HEK293 (cell line): ENCODE measurements at regions of chr2 and their contacts with region 1.

Region 1: DNA sequence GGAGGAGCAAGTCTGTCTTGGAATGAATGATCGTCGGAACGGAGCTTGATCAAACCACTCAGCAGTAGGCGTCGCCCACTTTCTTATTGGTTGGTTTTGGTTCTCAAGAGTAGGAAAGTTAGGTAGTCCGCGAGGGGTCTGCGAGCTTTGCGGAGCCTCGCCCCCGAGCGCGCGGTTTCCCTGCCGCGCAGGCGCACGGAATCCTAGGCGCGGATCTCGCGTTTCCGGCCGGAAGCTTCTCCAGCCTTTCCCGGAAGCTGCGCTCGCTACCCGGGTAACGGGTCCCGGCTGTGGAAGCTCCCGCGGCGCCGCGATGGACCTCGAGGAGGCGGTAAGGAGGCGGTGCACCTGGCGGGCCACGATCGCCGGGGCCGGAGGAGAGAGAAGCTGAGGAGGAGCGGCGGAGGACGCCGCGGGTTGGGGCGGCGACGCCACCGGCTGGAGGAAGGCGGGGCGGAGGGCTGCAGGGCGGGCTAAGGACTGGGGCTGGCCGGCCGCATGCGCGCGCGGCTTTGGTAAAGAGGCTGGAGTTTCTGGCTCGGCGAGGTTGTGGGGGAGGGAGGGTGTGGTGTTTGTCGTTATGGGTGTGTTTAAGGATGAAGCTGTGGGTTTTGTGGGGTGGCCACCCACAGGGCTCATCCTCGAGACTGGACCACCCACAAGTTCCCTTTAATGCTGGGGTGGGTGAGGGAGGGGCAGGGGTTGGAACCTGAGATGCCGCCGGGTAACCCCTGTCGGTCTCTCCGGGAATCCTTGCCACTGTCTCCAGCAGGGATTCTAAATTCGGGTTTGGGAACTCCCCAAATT is at the start of gene TAF1B:
- H3K4me3 ChIP-seq: peak within 1 kb of the TSS; percentile 84
- H3K27ac ChIP-seq: peak within 1 kb of the TSS; percentile 78
- H3K4me1 ChIP-seq: peaks cover 19% of the 10 kb centered on the region; the same call in 1 of the 2 replicates
- CTCF ChIP-seq: 0 out of 2 replicates have a peak, but pooled peaks have one; percentile 29

Region 2: DNA sequence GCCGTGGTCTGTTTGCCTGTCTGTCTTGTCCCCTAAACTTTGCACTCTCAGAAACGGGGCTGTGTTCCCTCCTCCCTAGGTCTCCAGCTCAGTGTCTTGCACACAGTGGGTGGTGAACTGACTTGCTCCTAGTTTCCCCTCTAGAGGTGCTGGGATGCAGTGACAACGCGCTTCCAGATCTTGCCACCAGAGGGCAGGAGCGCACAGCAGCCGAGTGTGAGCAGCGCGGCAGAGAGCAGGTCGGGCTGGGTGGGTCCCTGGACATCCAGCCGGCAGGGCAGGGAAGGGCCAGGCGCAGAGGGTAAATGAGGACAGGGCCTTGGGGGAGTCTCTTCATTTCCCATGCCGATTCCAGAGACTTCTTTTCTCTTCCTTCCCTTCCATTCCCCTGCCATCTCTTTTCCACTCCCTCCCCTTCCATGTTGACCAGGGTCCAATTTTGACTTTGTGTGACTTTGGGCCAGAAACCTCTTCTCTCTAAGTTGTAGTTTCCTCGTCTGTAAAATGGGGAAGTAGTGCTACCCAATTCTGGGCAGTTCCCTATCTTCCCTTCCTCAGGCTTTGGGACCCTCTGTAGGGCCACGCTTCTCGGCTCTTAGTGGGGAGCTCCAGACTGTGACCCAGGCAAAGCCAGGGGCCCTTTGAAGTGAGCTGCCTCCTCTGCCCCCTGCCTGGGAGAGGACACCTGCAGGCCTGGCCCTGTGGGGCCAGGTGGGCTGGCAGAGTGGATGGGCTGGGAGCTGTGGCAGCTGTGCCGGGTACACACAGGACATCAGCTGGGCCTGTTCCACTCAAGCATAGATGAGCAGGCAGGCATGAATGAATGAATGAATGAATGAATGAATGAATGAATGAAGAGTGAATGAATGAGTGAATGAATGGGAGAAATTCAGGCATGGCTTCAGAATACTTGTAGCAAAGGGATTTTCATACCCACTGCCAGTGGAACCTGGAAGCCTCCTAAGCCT is 43.5 kb before region 1 on chr2:
- CTCF ChIA-PET with region 1: interaction called, 10 read pairs
- POLR2A ChIA-PET with region 1: interaction called, 18 read pairs
- H3K4me3 ChIP-seq: no peak overlapping the region
- H3K27ac ChIP-seq: no peak overlapping the region
- H3K4me1 ChIP-seq: peaks cover 3% of the 10 kb centered on the region; the same call in 1 of the 2 replicates
- CTCF ChIP-seq: peak; percentile 98

Region 3: DNA sequence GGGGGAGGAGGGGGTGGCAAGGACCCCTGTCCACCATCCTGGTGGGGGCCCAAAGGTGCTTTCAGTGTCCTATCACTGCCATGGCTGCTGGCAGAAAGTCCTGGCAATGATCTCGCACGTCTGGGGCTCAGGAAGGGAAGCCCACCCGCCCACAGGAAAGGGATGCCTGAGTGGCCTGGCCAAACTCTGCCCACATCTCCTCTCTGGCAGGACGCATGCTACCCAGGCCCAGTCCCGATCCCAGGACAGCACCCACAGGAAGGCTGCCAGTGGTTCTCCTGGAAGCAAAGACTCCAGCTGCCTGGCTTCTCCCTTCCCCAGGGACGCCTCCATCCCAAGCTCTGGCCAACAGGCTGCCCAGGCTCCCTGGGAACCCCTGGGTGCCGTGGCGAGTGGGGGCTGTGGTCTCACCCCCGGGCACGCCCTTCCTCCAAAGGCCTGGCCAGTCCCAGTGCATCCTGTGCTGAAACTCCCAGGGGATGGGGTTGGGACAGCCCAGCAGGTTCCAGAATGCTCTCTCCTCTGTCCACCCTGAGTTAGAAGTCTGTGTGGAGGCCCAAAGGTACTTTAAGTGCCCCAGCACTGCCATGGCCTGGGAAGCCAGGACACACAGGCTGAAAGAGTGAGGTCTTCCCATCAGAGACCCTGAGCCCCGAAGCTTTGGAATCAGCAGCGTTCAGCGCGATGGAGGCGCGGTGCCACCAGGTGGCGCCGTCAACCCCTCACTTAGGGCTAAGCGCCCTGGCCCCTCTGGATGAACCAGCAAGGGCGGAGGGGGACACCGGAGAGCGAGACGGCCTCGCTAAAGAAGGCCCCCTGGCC is 29.9 kb before region 1 on chr2:
- CTCF ChIA-PET with region 1: interaction called, 45 read pairs
- POLR2A ChIA-PET with region 1: interaction called, 27 read pairs
- H3K4me3 ChIP-seq: no peak overlapping the region
- H3K27ac ChIP-seq: no peak overlapping the region
- H3K4me1 ChIP-seq: no peaks in the 10 kb centered on the region
- CTCF ChIP-seq: peak; percentile 86

Region 4: GRCh38 chr2:9820020-9820419 is 23.4 kb before region 1 on chr2:
- CTCF ChIA-PET with region 1: interaction called, 45 read pairs
- POLR2A ChIA-PET with region 1: interaction called, 35 read pairs
- H3K4me3 ChIP-seq: no peak overlapping the region
- H3K27ac ChIP-seq: no peak overlapping the region
- H3K4me1 ChIP-seq: no peaks in the 10 kb centered on the region
- CTCF ChIP-seq: no peak

Region 5: GRCh38 chr2:9830690-9831410 is 12.6 kb before region 1 on chr2:
- CTCF ChIA-PET with region 1: no interaction called
- POLR2A ChIA-PET with region 1: interaction called, 18 read pairs
- H3K4me3 ChIP-seq: no peak overlapping the region
- H3K27ac ChIP-seq: no peak overlapping the region
- H3K4me1 ChIP-seq: no peaks in the 10 kb centered on the region
- CTCF ChIP-seq: no peak

Region 6: GRCh38 chr2:10091182-10091888 is 247.9 kb after region 1 on chr2:
- CTCF ChIA-PET with region 1: no interaction called
- POLR2A ChIA-PET with region 1: no interaction called
- H3K4me3 ChIP-seq: no peak overlapping the region
- H3K27ac ChIP-seq: no peak overlapping the region
- H3K4me1 ChIP-seq: no peaks in the 10 kb centered on the region; the same call in 1 of the 2 replicates
- CTCF ChIP-seq: no peak

Region 7: GRCh38 chr2:10448208-10448645 is 604.8 kb after region 1 on chr2 and contains the start of gene ODC1:
- CTCF ChIA-PET with region 1: no interaction called
- POLR2A ChIA-PET with region 1: interaction called, 11 read pairs
- H3K4me3 ChIP-seq: peak within 1 kb of the TSS; percentile 44
- H3K27ac ChIP-seq: peak within 1 kb of the TSS; percentile 86
- H3K4me1 ChIP-seq: peaks cover 11% of the 10 kb centered on the region
- CTCF ChIP-seq: no peak